ENCODE measurements at regions of chr22 and their contacts with region 1.

Region 1: DNA sequence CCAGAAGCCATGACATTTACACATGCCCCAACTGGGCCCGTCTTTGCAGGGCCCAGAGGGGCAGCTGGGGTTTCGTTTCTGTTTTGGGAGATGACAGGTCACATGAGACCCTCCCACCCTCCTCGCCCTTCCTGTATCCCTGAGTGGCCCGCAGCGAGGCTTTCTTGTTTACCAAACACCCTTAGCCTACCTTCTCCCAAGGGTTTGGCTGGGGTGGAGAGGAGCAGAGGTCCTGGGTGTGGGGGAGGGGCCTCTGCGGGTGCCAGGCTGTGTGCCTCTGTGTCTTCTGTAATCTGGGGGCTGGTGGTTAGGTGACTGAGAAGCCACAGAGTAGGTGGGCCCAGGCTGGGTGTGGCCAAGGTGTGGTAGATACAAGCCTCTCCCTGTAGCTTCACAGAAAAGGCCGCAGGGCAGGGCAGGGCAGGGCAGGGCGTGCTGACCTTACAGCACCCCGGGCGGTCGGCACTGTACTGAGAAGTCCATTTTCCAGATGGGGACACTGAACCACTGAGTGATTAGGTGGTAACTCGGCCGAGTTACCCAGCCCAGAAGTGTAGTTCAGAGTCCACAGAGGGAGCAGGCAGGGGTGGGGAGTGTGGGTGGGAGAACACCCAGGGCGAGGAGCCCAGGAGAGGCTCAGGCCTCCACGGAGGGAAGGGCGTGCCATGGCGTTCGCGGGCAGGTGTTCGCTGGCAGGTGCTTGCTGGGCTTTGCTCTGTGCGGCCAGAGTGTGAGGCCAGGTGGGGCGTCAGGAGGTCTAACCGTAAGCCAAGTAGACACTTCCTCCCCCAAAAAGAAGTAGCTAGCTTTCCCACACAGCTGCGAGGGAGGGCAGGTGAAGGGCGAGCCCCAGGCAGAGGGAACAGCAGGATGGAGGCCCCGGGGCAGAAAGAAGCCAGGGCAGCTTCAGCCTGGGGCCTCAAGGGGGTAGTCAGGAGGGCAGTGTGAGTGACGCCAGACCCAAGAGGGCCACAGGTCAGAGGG is 8.8 kb downstream of the PRR5 start:
- DNase-seq: no peak
- H3K4me3 ChIP-seq: peak overlapping the region in 1 of 3 donors; percentile 11
- H3K27ac ChIP-seq: peak overlapping the region in 1 of 2 donors; percentile 15
- H3K4me1 ChIP-seq: peaks cover 0 to 5% of the 10 kb centered on the region in 2 donors
- H3K27me3 ChIP-seq: no peaks in the 10 kb centered on the region
- CTCF ChIP-seq: no peak
- POLR2A ChIP-seq: no peak

Region 2: GRCh38 chr22:46149512-46150033 is 1438.8 kb after region 1 on chr22:
- intact Hi-C with region 1: loop called (anchors 10 kb)
- DNase-seq: peak in 1 of 2 donors; percentile 58
- H3K4me3 ChIP-seq: peak overlapping the region; percentile 81 to 86 (median 81)
- H3K27ac ChIP-seq: peak overlapping the region; percentile 91 to 93
- H3K4me1 ChIP-seq: no peaks in the 10 kb centered on the region
- H3K27me3 ChIP-seq: no peaks in the 10 kb centered on the region
- CTCF ChIP-seq: no peak
- POLR2A ChIP-seq: no peak

Measured in breast epithelium (tissue), 4 donors.